ENCODE measurements at regions of chr17 and their contacts with region 1.

Region 1: GRCh38 chr17:44829523-44830358 is at the start of gene GJC1:
- DNase-seq: peak; percentile 41
- ATAC-seq: peak; percentile 45
- H3K4me3 ChIP-seq: peak within 1 kb of the TSS; percentile 75
- H3K27ac ChIP-seq: no peak within 1 kb of the TSS
- H3K4me1 ChIP-seq: peaks cover 25% of the 10 kb centered on the region
- H3K27me3 ChIP-seq: no peaks in the 10 kb centered on the region
- CTCF ChIP-seq: no peak
- total RNA-seq, gene GJC1: 16.4 and 17.1 TPM in 2 replicates

Region 2: GRCh38 chr17:44794851-44795413 is 34.8 kb before region 1 on chr17:
- CTCF ChIA-PET with region 1: no interaction called
- POLR2A ChIA-PET with region 1: no interaction called
- intact Hi-C with region 1: loop called (anchors 2 kb)
- DNase-seq: peak; percentile 94
- ATAC-seq: peak; percentile 84
- H3K4me3 ChIP-seq: no peak overlapping the region
- H3K27ac ChIP-seq: peak overlapping the region; percentile 82
- H3K4me1 ChIP-seq: peaks cover 24% of the 10 kb centered on the region
- H3K27me3 ChIP-seq: no peaks in the 10 kb centered on the region
- CTCF ChIP-seq: no peak

Region 3: GRCh38 chr17:44864866-44865660 is 35.3 kb after region 1 on chr17:
- CTCF ChIA-PET with region 1: no interaction called
- POLR2A ChIA-PET with region 1: no interaction called
- intact Hi-C with region 1: loop called (anchors 5 kb)
- DNase-seq: peak; percentile 93
- ATAC-seq: peak; percentile 88
- H3K4me3 ChIP-seq: no peak overlapping the region
- H3K27ac ChIP-seq: no peak overlapping the region
- H3K4me1 ChIP-seq: no peaks in the 10 kb centered on the region
- H3K27me3 ChIP-seq: no peaks in the 10 kb centered on the region
- CTCF ChIP-seq: peak; percentile 97